Endothelial cell of umbilical vein (primary cell): ENCODE measurements at regions of chr14 and their contacts with region 1.

Region 1: DNA sequence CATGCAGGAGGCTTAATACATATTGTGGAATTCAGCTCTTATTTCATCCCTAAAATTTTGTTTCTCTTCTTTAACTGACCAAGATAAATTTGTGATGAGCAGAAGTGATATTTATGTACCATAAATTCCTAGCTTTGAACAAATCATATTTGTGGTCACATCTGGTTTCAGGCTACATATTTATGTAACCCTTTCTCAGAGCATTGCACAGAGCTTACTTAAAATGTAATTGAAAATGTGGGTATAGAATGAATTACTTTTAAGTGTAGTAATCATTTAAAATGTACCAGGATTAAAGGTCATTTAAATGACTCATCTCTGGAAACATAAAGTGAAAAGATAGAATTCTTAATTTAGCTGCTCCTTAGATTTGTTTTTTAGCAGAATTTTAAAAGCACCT is 129.9 kb upstream of the FRMD6 start:
- DNase-seq: no peak
- H3K4me3 ChIP-seq: no peak overlapping the region
- H3K27ac ChIP-seq: no peak overlapping the region
- H3K4me1 ChIP-seq: peaks cover 17% of the 10 kb centered on the region
- H3K27me3 ChIP-seq: no peaks in the 10 kb centered on the region
- CTCF ChIP-seq: no peak
- POLR2A ChIP-seq: no peak

Region 2: GRCh38 chr14:51539571-51540037 is 17.8 kb after region 1 on chr14:
- CTCF ChIA-PET with region 1: interaction called, 4 read pairs
- POLR2A ChIA-PET with region 1: no interaction called
- dilution Hi-C with region 1: no loop called
- intact Hi-C with region 1: loop called (anchors 2 kb)
- DNase-seq: peak; percentile 82
- H3K4me3 ChIP-seq: no peak overlapping the region
- H3K27ac ChIP-seq: peak overlapping the region; percentile 96
- H3K4me1 ChIP-seq: peaks cover 28% of the 10 kb centered on the region
- H3K27me3 ChIP-seq: no peaks in the 10 kb centered on the region
- CTCF ChIP-seq: no peak
- POLR2A ChIP-seq: no peak

Region 3: DNA sequence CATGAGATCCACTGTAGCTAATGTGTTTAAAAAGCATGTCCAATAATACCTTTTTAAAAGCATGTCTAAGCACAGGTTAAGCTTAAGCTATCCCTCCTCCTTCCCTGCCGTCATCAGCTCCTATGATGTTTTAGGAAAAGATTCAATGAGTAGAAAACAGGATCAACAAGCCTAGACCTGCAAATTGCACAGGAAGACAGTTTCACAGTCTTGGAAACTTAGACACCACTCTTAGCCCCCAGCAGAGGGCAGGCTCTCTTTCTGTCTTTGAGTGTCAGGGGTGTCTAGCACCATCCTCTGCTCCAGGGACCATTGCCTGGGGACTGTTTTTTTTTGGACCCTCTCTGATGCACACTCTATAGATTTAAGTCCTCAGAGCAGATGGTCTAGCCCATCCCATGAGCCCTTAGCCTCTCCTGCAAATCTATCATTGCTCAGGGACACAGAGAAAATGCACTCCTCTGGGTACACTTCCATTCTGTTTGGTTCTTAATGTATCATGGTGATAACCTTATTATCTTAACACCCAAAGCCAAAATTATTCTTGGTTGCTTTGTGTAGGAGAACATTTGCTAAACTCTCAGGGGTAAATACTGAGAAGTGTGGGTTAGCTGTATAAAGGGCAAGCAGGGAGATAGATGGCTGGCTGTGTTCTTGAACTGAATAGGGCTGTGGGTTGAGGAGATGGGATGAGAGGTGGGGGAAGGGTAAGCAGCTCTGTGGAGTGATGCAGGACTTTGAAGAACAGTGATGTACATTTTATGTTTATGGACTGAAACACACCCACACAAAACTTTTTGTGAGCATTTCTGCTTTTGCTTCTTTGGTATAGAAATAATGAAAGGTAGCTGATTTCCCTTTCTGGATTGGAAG is 1891.3 kb after region 1 on chr14:
- CTCF ChIA-PET with region 1: no interaction called
- POLR2A ChIA-PET with region 1: no interaction called
- dilution Hi-C with region 1: no loop called
- intact Hi-C with region 1: no loop called
- DNase-seq: peak; percentile 26
- H3K4me3 ChIP-seq: no peak overlapping the region
- H3K27ac ChIP-seq: no peak overlapping the region
- H3K4me1 ChIP-seq: no peaks in the 10 kb centered on the region
- H3K27me3 ChIP-seq: peaks cover 0 to 3% of the 10 kb centered on the region in 2 experiments
- CTCF ChIP-seq: peak; percentile 44 to 60
- POLR2A ChIP-seq: no peak